ENCODE measurements at regions of chr2 and their contacts with region 1.

Region 1: DNA sequence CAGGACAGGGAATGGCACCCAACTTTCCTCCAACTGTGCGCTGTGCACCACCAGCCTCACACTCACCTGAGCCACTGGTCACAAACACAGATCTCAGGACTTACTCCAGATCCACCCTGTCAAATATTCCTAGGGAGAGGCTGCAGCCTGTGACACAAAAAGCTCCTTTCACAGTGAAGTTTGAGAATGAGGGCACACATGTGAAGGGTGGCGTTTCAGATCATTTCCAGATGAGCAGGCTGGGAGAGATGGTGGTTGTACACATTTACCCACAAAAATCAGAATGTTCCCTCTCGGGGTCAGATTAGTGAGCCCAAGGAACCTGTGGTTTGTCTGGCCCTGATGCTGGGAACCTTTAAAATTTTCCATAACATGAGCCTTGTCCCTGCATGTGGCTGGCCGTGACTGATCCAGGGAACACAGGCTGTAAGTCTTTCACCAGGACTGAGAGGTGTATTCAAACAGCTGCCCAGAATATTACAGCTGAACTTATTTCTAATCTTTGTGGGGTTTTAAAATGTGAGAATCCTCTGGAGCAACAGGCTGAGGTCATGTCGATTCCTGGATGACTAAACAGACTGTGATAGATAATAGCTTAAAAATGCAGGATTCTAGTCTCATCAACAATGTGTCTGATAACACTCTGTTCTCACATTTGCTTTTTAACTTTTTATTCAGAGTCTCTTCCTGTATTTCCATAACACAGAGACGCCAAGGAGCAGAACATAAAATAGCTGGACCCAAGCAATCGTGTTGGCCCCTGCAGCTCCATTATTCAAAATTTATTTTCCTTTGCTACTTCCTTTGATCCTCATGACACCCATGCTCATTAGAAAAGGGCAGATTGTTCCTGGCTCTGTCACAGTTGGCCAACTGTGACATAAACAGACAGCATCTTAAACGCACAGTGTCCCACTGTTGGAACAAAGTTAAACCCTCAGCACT is 35.5 kb downstream of the IL1R2 start:
- DNase-seq: no peak
- H3K4me3 Mint-ChIP-seq: no peak overlapping the region
- H3K27ac Mint-ChIP-seq: peak overlapping the region; percentile 63
- H3K4me1 Mint-ChIP-seq: peaks cover 64% of the 10 kb centered on the region
- H3K27me3 Mint-ChIP-seq: no peaks in the 10 kb centered on the region

Region 2: GRCh38 chr2:101983928-101984327 is 43.4 kb before region 1 on chr2:
- CTCF ChIA-PET with region 1: no interaction called
- POLR2A ChIA-PET with region 1: no interaction called
- intact Hi-C with region 1: no loop called
- DNase-seq: no peak
- H3K4me3 Mint-ChIP-seq: no peak overlapping the region
- H3K27ac Mint-ChIP-seq: no peak overlapping the region
- H3K4me1 Mint-ChIP-seq: no peaks in the 10 kb centered on the region
- H3K27me3 Mint-ChIP-seq: peaks cover 1% of the 10 kb centered on the region

Region 3: DNA sequence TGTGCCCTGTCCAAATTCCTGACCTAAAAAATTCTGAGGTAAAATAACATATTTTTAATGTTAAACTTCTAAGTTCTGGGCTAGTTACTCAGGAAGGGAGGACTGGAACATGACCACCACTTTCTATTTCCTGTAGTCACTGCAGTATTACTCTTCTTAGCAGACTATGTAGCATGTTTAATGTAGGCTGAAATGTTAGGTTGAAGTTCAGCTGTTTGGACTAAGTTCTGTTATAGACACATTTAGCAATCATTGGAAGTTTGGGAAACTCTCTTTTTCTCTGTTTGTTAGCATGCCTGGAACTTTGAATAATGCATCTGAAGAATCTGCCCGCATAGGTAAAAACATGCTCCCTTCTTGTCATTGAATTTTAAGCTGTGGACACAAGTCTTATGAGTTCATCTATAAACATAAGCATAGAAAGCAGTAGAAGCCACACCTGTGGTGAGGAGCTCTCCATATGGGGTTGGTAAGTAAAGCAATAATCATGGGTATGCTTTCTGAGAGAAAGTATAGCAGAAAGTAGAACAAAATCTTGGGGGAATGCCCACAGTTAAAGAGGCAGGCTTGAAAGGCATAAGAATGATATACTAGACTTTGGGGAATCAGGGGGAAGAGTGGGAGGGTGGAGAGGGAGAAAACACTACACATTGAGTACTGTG is 17.1 kb after region 1 on chr2:
- CTCF ChIA-PET with region 1: interaction called, 3 read pairs
- POLR2A ChIA-PET with region 1: interaction called, 3 read pairs
- intact Hi-C with region 1: loop called (anchors 2 kb)
- DNase-seq: no peak
- H3K4me3 Mint-ChIP-seq: no peak overlapping the region
- H3K27ac Mint-ChIP-seq: no peak overlapping the region
- H3K4me1 Mint-ChIP-seq: peaks cover 16% of the 10 kb centered on the region
- H3K27me3 Mint-ChIP-seq: peaks cover 43% of the 10 kb centered on the region